ENCODE measurements at regions of chr15 and their contacts with region 1.

Region 1: DNA sequence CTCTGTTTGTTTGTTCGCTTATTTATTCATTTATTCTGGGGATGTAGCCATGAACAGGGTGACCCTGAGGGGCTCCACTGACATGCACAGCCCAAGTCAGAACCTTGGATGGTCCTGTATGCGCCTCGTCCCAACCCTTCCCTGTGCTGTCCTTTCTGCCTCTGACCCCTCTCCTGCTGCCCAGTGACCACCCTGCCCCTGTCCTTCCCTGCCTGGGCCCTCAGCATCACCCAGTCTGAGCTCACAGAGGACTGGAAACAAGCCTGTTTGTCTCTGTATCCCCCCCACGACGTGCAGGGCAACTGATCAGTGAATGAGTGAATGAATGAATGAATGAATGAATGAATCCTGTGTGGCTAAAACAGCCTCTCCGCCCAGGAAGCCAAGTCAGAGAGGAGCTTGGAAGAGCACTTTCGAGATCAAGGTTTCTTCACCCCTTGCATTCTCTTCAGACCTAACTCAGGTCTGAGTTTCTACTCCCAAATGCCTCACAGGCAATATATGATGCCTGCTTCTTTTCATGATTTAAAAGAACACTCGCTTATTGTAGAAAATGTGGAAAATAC is 157.7 kb downstream of the SMAD6 start:
- DNase-seq: no peak
- H3K4me3 ChIP-seq: no peak overlapping the region
- H3K27ac ChIP-seq: no peak overlapping the region
- H3K4me1 ChIP-seq: peaks cover 4% of the 10 kb centered on the region
- CTCF ChIP-seq: no peak

Region 2: GRCh38 chr15:66838671-66839239 is 21.0 kb before region 1 on chr15:
- CTCF ChIA-PET with region 1: no interaction called
- POLR2A ChIA-PET with region 1: no interaction called
- intact Hi-C with region 1: loop called (anchors 2 kb)
- DNase-seq: peak; percentile 56
- H3K4me3 ChIP-seq: no peak overlapping the region
- H3K27ac ChIP-seq: no peak overlapping the region
- H3K4me1 ChIP-seq: peaks cover 25% of the 10 kb centered on the region
- CTCF ChIP-seq: peak; percentile 83